ENCODE measurements at regions of chr10 and their contacts with region 1.

Region 1: GRCh38 chr10:76026905-76027304 is 595.5 kb downstream of the LRMDA start:
- DNase-seq: no peak
- ATAC-seq: no peak
- H3K4me3 ChIP-seq: no peak overlapping the region
- H3K27ac ChIP-seq: no peak overlapping the region
- H3K4me1 ChIP-seq: no peaks in the 10 kb centered on the region
- H3K27me3 ChIP-seq: no peaks in the 10 kb centered on the region; a peak in 1 of 4 replicates
- CTCF ChIP-seq: no peak
- EP300 ChIP-seq: no peak
- POLR2A ChIP-seq: no peak
- RAD21 ChIP-seq: no peak

Region 2: DNA sequence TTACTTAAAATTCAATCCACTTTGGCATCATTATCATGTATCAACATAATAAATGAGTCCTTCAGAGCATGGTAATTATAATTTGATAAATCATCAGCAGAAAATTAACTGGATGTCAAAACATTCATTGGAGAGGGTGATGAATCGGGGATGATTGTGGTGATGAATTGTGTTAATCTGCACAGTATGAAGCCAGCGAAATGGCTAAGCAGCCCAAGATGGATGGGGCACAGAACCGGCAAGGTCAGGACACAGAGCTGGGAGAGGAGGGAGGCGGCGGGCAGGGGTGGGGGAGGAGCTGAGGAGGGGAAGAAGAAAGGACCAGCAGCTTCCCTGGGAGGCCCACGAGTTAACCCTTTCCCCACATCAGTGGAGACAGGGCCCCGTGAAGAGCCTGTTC is 59.4 kb before region 1 on chr10:
- CTCF ChIA-PET with region 1: no interaction called
- POLR2A ChIA-PET with region 1: no interaction called
- RAD21 ChIA-PET with region 1: no interaction called
- SMC1A ChIA-PET with region 1: no interaction called
- in situ Hi-C with region 1: no loop called
- intact Hi-C with region 1: loop called (anchors 10 kb)
- DNase-seq: no peak
- ATAC-seq: no peak
- H3K4me3 ChIP-seq: no peak overlapping the region
- H3K27ac ChIP-seq: no peak overlapping the region
- H3K4me1 ChIP-seq: no peaks in the 10 kb centered on the region
- H3K27me3 ChIP-seq: no peaks in the 10 kb centered on the region
- CTCF ChIP-seq: no peak
- EP300 ChIP-seq: no peak
- POLR2A ChIP-seq: no peak
- RAD21 ChIP-seq: no peak

Measured in GM12878 (cell line).